ENCODE measurements at regions of chr1 and their contacts with region 1.

Region 1: GRCh38 chr1:1273512-1274298 is at the start of gene UBE2J2:
- DNase-seq: peak; percentile 83 to 98 (median 95)

Region 2: GRCh38 chr1:1231400-1232223 is 42.1 kb before region 1 on chr1 and contains the start of gene SDF4:
- intact Hi-C with region 1: loop called (anchors 5 kb)
- DNase-seq: peak; percentile 88 to 99 (median 97)

Measured in head of caudate nucleus (tissue), 42 donors.